ENCODE measurements at regions of chr17 and their contacts with region 1.

Region 1: DNA sequence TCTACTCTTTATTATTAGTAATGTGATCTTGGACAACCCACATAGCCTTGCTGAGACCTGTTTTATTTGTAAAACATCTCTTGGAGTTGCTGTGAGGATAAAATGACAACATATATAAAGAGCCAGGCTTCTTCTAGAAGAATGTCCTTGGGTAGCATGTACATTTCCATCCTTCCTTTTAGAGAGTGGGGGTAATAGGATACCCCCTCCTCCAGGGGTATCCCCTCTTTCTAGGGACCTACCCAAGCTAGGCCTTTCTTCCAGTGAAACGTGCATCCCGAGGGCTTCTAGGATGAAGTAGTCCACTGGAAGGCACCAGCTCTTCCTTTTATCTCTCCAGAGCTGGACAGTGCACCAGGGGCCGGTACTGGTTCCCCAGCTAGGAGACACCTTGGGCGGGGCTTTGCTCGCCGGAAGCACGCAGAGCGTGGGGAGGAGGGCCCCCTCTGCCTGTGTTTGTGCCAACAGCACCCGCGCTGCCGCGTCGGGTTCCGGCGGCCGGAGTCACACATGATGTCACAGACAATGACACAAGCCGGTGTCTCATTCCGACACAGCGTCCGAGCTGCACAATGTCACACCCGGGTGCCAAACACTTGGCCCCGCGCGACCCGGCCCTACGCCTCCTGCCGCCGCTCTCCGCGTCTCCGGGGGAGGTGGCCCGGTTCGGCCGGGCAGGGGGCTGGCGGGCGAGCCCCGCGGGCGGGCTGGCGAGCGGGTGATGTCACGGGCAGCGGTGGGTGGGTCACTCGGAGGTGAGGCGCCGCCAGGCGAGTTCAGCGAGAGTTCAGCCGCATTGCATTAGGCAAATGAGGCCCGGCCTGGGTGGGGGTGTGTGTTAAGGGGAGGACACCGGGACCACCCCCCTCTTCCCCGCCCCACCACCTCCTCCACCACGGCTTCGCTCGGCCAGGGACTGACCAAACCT is 23.4 kb downstream of the GJD3 start:
- DNase-seq: peak; percentile 91 to 97
- ATAC-seq: peak; percentile 77
- H3K4me3 ChIP-seq: peak overlapping the region; percentile 70 to 81 (median 76)
- H3K27ac ChIP-seq: peak overlapping the region; percentile 95 to 100 (median 98)
- H3K4me1 ChIP-seq: peaks cover 75 to 86% of the 10 kb centered on the region in 2 donors
- H3K27me3 ChIP-seq: no peaks in the 10 kb centered on the region
- CTCF ChIP-seq: no peak
- POLR2A ChIP-seq: peak; percentile 86 to 91

Region 2: GRCh38 chr17:39199820-39200069 is 1141.4 kb before region 1 on chr17:
- in situ Hi-C with region 1: no loop called
- intact Hi-C with region 1: loop called (anchors 10 kb)
- DNase-seq: peak; percentile 92
- ATAC-seq: peak; percentile 69 to 82
- H3K4me3 ChIP-seq: peak overlapping the region; percentile 79 to 94 (median 84)
- H3K27ac ChIP-seq: peak overlapping the region; percentile 87 to 99 (median 94)
- H3K4me1 ChIP-seq: peaks cover 44 to 45% of the 10 kb centered on the region in 2 donors
- H3K27me3 ChIP-seq: no peaks in the 10 kb centered on the region
- CTCF ChIP-seq: no peak
- POLR2A ChIP-seq: peak in 1 of 2 donors; percentile 82

Region 3: DNA sequence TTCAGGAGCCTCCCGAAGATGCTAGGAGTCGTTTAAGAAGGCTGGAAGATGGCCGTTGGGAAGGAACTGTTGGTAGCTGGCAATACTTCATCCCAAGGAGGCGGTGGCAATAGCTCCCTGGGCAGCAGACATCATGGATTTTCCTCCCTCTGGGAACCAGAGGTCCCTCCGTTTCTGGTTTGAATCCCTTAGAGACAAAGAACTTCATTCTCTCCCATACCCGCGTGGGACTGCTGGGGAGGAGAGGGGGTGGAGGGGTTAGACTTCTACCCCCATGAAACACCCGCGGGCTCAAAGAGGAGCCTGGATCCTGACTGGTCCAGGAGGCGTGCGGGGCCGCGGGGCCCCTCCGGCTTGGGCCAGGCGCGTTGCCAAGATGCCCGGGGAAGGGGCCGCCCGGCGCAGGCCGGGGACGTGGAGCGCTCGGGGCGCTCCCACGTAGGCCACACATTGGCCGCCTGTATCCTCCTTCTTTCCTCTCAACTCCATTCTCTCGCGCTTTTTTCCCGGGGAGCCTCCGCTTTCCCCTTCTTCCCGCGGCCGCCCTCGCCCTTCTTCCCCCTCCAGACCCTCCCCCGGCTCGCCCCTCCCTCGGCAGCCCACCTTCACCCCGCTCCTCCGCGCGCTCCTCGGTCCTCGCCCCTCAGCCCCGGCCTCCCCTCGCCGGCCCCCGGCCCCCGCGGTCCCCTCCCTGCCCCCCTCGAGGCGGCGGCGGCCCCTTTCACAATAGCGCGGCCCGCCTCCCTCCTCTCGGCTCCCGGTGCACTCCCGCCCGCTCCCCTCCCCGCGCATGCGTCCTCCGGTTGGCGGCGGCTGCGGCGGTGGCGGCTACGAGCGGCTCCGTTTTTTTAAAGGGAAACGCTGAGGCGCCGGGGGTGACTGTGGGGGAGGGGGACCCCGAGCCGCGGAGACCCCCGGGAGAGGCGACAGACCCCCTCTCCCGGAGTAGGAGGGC is 219.7 kb before region 1 on chr17 and contains the start of gene MSL1:
- in situ Hi-C with region 1: no loop called
- intact Hi-C with region 1: loop called (anchors 5 kb)
- DNase-seq: peak; percentile 84 to 89
- ATAC-seq: peak; percentile 75 to 76
- H3K4me3 ChIP-seq: peak within 1 kb of the TSS; percentile 69 to 100 (median 95)
- H3K27ac ChIP-seq: peak within 1 kb of the TSS; percentile 93 to 100 (median 99)
- H3K4me1 ChIP-seq: peaks cover 25 to 29% of the 10 kb centered on the region in 2 donors
- H3K27me3 ChIP-seq: no peaks in the 10 kb centered on the region
- CTCF ChIP-seq: no peak
- POLR2A ChIP-seq: peak; percentile 83 to 88
- total RNA-seq, gene MSL1: 75.7 to 96.3 (median 85.9) TPM

Region 4: GRCh38 chr17:40309031-40309948 is 31.9 kb before region 1 on chr17 and contains the start of gene RARA:
- in situ Hi-C with region 1: no loop called
- intact Hi-C with region 1: loop called (anchors 1 kb)
- DNase-seq: peak in 1 of 2 donors; percentile 51
- ATAC-seq: no peak
- H3K4me3 ChIP-seq: peak within 1 kb of the TSS; percentile 27 to 45 (median 36)
- H3K27ac ChIP-seq: peak within 1 kb of the TSS; percentile 95 to 100 (median 98)
- H3K4me1 ChIP-seq: peaks cover 72 to 81% of the 10 kb centered on the region in 2 donors
- H3K27me3 ChIP-seq: no peaks in the 10 kb centered on the region
- CTCF ChIP-seq: no peak
- POLR2A ChIP-seq: no peak
- total RNA-seq, gene RARA: 20.3 to 67.0 (median 48.4) TPM